Activated T-helper 1 cell treated with anti-CD3 and anti-CD28 coated beads, Interleukin-12 subunit alpha, Interleukin-12 subunit beta, Interleukin-2, Interleukin-4 antibody, amounts not matched to agents 30 ng/mL and 10 ng/mL and 1 ng/mL, durations not matched to agents 14 hours and 24 hours and 36 hours (primary cell): ENCODE measurements at regions of chr9 and their contacts with region 1.

Region 1: DNA sequence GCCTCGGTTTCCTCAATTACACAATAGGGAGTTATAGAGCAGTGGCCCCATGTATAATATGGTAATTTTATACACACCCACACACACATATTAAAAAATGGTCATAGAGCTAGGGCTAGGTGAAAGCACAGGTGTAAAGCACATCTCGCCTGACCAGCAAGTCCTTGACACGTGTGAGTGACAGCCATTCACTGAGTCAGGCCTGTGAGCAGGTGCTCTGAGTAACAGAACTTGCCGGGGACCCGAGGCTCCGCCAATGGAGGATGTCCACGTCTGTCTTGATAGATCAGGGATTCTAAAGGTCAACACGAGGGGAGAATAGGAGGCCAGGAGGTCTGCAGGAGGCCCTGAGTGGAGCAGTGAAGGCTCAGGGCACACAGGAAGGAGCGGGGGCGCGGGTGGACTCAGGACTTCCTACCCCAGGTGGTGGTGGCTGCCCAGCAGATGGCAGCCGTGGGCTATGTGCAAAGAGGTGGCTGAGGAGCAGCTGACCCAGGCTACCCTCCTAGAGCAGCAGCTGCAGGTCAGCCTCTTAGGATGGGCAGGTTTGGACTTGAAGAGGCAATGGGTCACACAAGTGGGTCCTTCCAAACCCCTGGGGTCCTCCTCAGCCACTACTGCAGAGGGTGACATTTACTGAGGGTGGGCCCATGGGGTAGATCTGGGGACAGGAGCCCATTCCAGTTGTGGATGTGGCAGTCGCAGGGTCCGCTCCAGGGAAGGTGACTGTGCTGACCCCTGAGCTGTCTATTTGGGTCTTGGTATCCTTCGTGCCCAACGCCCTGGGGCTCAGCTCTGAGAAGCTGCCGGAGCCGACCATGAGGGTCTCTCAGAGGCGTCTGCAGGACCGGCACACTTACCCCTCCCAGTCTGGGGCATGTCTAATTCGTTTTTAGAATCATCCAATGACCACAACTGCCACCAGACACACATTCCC is 45.9 kb downstream of the PRRT1B start:
- DNase-seq: peak; percentile 63
- H3K4me3 Mint-ChIP-seq: no peak overlapping the region
- H3K27ac Mint-ChIP-seq: peak overlapping the region; percentile 81
- H3K4me1 Mint-ChIP-seq: peaks cover 37% of the 10 kb centered on the region
- H3K27me3 Mint-ChIP-seq: no peaks in the 10 kb centered on the region

Region 2: DNA sequence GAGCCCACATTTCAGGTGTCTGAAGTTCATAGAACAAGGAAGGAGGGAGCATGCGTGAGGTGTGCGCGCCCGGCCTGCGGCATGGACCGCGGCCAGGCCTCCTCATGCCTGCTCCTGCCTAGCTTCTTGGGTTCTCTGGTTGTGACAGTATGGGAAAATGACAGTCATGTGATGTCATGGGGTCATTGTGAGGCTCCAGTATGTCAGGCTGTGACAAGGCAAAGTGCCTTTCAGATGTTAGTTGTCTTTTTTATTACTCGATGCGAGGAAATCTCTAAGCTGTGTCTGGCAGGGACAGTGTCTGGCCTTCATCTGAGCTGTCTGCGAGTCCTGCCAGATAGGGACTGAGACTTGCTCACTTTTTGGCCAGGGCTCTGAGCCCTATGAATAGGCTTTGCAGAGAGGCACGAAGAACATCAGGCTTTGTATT is 73.4 kb before region 1 on chr9:
- intact Hi-C with region 1: no loop called
- DNase-seq: no peak
- H3K4me3 Mint-ChIP-seq: no peak overlapping the region
- H3K27ac Mint-ChIP-seq: no peak overlapping the region
- H3K4me1 Mint-ChIP-seq: no peaks in the 10 kb centered on the region
- H3K27me3 Mint-ChIP-seq: peaks cover 1% of the 10 kb centered on the region

Region 3: DNA sequence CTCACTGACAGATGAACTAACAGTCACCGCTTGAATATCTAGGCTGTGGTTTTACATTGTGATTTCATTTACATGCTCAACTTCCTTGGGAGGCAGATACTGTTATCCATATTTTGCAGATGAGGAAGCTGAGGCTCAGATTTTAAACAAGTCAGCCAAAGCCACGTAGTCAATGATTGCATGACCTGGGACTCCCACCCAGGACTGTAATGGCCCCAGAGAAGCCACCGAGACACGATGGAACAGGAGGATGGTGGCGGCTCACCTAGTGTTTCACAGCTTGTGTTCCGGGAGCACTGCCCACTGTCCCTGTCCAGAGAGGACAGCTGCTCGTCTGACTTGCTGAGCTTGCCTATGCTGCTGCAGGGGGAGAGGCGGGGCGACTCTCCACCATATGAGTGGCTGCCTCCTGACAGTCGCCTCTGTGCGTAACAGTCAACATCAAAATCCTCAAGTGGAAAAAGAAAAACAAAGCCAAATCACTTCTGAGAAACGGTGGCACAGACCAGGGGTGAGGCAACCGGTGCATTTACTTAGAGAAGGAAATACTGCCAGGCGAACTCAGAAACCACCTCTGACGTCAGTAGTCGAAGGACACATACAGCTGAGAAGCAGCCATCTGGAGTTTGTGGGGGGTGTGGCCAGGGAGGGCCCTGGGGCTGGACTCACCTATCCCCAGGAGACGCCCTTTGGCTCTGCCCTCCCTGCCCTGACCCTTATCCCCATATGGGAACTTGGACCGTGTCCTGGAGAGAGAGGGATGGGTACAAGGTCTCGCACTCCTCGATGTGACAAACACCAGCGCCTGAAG is 36.7 kb after region 1 on chr9:
- intact Hi-C with region 1: loop called (anchors 1 kb)
- DNase-seq: peak; percentile 61
- H3K4me3 Mint-ChIP-seq: peak overlapping the region; percentile 32
- H3K27ac Mint-ChIP-seq: peak overlapping the region; percentile 89
- H3K4me1 Mint-ChIP-seq: peaks cover 71% of the 10 kb centered on the region
- H3K27me3 Mint-ChIP-seq: peaks cover 2% of the 10 kb centered on the region

Region 4: GRCh38 chr9:131709771-131710454 is 118.7 kb after region 1 on chr9:
- intact Hi-C with region 1: loop called (anchors 1 kb)
- DNase-seq: peak; percentile 44
- H3K4me3 Mint-ChIP-seq: peak overlapping the region; percentile 69
- H3K27ac Mint-ChIP-seq: peak overlapping the region; percentile 97
- H3K4me1 Mint-ChIP-seq: peaks cover 76% of the 10 kb centered on the region
- H3K27me3 Mint-ChIP-seq: no peaks in the 10 kb centered on the region

Region 5: DNA sequence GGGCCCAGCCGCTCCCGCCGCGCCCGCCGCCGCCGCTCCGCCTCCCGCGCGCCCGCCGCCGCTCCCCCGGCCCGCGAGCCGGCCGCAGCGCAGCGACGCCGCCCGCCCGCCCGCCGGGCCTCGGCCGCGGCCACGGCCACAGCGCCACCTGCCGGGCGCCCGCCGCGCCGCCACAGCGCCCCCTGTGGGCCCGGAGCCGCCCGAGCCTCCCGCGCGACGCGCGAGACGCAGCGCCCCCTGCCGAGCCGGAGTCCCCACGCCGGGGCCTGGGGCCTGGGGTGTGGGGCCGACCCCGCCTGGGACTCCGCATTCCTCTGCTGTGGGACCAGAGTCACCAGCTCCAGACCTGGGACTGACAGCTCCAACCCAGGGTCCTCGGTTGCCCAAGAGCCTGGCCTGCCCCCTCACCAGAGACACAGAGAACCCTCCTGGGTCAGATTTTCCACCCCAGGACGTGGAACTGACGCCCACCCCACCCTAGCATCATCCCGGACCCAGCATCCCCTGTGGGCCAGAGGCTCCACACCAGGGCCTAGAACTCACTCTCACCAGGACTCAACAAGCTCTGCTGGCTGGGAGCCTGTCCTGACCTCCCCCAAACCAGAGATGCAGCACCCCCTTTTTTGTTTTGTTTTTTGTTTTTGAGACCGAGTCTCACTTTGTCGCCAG is 148.9 kb after region 1 on chr9 and contains the start of gene RAPGEF1:
- intact Hi-C with region 1: loop called (anchors 1 kb)
- DNase-seq: peak; percentile 84
- H3K4me3 Mint-ChIP-seq: peak within 1 kb of the TSS; percentile 92
- H3K27ac Mint-ChIP-seq: peak within 1 kb of the TSS; percentile 85
- H3K4me1 Mint-ChIP-seq: peaks cover 62% of the 10 kb centered on the region
- H3K27me3 Mint-ChIP-seq: no peaks in the 10 kb centered on the region
- total RNA-seq, gene RAPGEF1: 168 and 172 TPM in 2 replicates

Region 6: GRCh38 chr9:131747356-131747755 is 156.2 kb after region 1 on chr9:
- intact Hi-C with region 1: loop called (anchors 1 kb)
- DNase-seq: no peak
- H3K4me3 Mint-ChIP-seq: no peak overlapping the region
- H3K27ac Mint-ChIP-seq: no peak overlapping the region
- H3K4me1 Mint-ChIP-seq: peaks cover 34% of the 10 kb centered on the region
- H3K27me3 Mint-ChIP-seq: peaks cover 5% of the 10 kb centered on the region

Region 7: DNA sequence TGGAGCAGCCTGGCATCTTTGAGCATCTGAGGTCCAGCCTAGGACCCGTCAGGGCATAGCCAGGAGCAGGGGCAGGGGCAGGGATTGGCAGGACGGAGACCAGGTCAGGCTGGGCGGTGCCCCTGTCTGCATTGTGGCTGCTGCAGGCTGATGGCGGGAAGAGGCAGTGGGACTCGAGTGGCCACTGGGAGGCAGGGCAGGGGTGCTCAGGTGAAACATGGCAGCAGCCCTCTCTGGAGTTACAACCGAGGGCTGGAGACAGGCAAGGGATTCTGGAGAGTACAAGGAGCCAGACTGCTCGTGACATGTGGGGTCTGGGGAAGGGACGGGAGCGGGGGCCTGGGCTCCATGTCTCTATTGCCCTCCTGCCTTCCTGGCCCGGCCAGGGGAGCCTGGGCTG is 246.1 kb after region 1 on chr9:
- intact Hi-C with region 1: no loop called
- DNase-seq: no peak
- H3K4me3 Mint-ChIP-seq: no peak overlapping the region
- H3K27ac Mint-ChIP-seq: no peak overlapping the region
- H3K4me1 Mint-ChIP-seq: peaks cover 41% of the 10 kb centered on the region
- H3K27me3 Mint-ChIP-seq: peaks cover 2% of the 10 kb centered on the region